ENCODE measurements at regions of chr10 and their contacts with region 1.

Region 1: DNA sequence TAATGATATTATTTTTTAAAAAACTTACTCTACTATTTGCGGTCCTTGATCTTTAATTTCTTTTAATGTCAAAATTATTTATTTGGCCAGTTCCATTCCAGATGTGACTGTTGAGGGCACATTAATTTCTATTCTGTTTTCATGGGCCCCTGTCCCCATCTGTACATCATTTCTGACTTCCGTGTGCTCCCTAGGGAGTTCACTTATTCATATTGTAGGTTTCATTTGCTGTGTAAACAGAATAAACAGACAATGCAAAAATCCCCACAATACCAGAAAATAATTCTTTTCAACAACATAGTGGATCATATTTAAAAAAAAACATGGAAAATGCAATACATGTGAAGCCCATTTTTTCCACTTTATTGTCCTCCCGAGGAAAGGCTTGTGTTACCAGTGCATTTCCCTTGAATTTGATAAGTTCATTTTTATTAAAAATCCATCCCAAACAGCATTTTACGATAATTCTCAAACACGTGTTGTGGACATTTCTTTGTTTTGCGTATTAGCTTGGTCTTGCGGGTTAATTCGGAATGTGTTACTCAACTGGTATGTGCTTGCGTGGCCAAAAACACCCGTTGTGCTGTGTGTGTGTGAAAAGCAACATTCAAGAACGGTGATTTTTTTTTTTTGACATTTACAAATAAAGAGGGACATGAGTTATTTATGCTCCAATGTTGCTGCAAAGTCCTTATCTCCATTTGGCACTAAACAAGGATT is 138.4 kb downstream of the MGMT start:
- DNase-seq: no peak
- ATAC-seq: no peak

Region 2: DNA sequence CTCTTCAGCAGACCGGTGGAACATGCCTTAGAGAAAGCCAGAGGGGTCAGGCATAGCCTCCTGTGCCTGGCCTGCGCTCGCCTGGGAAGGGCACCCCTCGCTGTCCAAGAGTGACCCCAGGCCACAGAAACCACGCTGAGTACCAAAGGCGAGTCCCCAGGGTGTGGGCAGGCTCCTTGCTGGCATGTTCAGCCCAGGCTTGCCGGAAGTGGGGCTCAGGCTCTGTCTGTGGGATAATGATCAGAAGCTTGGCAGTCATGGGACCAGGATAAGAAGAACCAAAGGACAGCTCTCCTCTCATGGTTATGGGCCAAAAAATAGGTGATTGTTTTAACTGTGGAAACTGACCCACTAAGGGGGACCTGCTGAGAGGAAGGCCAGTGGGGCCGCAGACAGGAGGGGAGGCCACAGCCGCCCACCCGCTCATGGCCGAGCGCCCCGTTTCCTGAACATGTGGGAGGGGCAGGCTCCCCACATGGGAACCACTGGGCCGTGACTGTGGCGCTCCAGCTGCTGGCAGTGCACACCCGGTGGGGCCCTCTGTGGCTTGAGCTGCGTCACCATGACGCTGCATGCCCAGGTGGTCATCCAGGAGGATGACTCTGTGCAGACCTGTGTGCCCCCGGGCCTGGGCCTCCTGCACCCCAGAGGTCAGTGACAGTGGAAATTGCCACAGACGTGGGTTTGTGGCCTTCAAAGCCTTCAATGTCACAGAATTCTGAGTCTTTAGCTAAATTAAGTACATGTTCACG is 53.5 kb before region 1 on chr10:
- intact Hi-C with region 1: loop called (anchors 1 kb)
- DNase-seq: no peak
- ATAC-seq: no peak

Measured in sciatic nerve (tissue), 2 donors.